ENCODE measurements at regions of chr1 and their contacts with region 1.

Region 1: DNA sequence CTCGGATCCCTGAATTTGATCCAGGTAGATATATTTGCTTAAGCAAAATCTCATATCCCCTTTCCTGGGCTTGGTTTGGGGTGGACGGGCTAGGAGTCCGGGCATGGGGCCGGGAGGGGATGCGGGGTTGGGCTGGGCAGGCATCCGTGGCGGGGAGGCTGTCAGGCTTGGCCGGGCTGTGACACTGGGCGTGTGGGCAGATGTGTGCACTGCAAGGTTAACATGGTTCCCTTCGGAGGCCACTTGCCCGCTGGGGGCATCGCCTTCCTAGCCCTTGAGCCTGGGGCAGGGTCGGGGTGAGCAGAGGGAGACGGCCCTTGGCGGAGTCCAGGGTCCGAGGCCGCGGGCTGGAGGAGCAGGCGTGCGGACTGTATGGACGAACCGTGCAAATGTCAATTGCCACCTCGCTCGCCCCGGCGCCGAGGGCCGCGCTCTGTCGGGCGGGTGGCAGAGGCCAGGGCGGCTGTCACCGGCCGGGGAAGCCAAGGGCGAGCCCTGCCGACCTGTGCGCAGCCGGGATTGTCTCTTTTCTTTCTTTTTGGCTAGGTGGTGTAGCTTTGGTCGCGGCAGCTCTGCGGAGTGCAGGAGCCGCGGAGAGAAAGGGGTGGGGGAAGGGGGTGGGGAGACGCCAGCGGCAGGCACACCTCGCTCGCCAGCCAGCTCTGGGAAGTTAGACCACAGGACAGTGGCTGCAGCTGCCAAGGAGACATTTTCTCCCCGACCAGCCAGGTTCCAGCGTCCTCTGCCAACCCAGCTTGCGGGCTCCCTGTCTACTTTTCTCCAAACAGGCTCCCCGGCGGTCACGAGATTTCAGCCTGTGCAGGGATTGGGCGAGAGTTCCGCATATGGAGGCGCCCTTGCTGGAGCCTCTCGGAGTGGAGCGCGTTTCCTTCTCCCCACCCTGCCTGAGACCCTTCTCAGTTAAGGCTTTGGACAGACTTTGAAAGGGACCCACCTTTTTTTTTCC is 1.3 kb downstream of the RCOR3 start:
- DNase-seq: peak; percentile 45 to 77
- ATAC-seq: peak; percentile 11 to 16 (median 14)
- H3K4me3 ChIP-seq: peak overlapping the region; percentile 97
- H3K4me3 Mint-ChIP-seq: peak overlapping the region; percentile 95
- H3K27ac ChIP-seq: peak overlapping the region; percentile 90
- H3K27ac Mint-ChIP-seq: peak overlapping the region; percentile 94 to 96
- H3K4me1 ChIP-seq: peaks cover 13% of the 10 kb centered on the region
- H3K4me1 Mint-ChIP-seq: peaks cover 29 to 32% of the 10 kb centered on the region in 2 donors
- H3K27me3 ChIP-seq: no peaks in the 10 kb centered on the region
- H3K27me3 Mint-ChIP-seq: no peaks in the 10 kb centered on the region
- CTCF ChIP-seq: no peak

Region 2: DNA sequence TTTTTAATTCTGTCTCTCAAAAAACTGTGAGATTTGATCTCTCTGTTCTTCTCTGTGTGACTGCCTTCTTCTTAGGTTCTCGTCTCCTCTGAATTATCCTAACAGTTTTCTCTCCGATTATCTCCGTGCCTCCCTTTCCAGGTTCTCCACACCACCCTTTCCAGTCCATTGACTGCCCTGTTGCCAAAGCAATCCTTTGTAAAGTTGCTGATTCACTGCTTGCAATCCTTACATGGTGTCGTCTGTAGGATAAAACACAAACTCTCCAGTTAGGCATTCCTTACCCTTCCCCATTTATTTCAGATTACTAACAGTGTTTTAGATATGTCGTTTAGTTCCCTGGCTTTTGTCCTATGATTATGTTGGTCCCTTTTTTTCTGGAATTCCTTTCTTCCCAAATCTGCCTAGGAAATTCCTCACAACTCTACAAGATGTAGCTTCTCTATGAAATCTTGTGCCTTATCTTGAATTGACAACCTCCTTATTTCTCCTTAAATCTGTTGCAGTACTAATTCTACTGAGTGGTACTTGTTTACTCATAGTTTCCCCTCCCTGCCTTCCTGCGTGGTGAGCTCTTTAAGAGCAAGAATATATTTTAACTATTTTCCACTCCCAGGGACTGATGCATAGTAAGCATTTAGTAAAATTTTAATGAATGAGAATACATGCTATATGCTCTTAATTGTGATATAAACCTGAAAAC is 21.0 kb after region 1 on chr1:
- intact Hi-C with region 1: no loop called
- DNase-seq: no peak
- ATAC-seq: no peak
- H3K4me3 ChIP-seq: no peak overlapping the region
- H3K4me3 Mint-ChIP-seq: no peak overlapping the region
- H3K27ac ChIP-seq: no peak overlapping the region
- H3K27ac Mint-ChIP-seq: no peak overlapping the region
- H3K4me1 ChIP-seq: no peaks in the 10 kb centered on the region
- H3K4me1 Mint-ChIP-seq: peaks cover 6 to 14% of the 10 kb centered on the region in 2 donors
- H3K27me3 ChIP-seq: no peaks in the 10 kb centered on the region
- H3K27me3 Mint-ChIP-seq: no peaks in the 10 kb centered on the region
- CTCF ChIP-seq: no peak

Region 3: DNA sequence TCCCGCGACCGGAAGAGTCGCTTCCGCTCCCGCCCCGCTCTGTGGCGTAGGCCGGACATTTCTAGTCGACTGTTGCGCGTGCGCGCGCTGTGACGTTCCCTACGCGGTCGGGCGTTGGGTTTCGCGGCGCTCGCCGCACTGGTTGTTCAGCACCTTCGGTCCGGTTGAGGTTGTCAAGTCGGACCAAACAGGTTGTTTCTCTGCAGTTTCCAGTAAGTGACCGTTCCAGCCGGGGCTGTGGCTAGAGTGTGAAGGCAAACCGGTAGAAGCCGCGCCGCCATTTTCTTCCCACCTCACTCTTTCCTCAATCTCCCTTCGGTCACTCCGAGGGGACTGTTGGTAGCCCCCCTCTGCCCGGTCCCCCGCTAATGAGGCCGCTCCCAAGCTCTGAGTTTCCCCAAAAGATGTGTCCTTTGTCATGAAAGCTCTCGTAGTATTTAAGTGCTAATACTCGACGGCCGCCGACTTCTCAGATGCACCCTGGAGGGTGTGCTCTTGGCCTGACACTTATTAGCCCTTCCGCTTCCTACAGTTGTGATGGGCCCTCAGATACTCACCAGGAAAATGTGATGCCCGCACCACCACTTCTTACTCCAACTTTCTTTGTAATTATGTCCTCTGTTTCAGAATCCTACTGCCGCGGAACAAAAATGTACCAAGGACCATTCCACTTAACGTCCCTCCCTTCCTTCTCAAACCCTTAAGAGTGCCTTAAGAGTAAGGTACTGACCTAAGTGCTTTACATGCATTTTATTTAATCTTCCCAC is 122.5 kb after region 1 on chr1:
- intact Hi-C with region 1: loop called (anchors 2 kb)
- DNase-seq: peak; percentile 79 to 87
- ATAC-seq: peak; percentile 92 to 94 (median 92)
- H3K4me3 ChIP-seq: peak overlapping the region; percentile 90
- H3K4me3 Mint-ChIP-seq: peak overlapping the region; percentile 91
- H3K27ac ChIP-seq: peak overlapping the region; percentile 97
- H3K27ac Mint-ChIP-seq: peak overlapping the region; percentile 95 to 97
- H3K4me1 ChIP-seq: peaks cover 10% of the 10 kb centered on the region
- H3K4me1 Mint-ChIP-seq: peaks cover 30 to 38% of the 10 kb centered on the region in 2 donors
- H3K27me3 ChIP-seq: no peaks in the 10 kb centered on the region
- H3K27me3 Mint-ChIP-seq: peaks cover 0 to 3% of the 10 kb centered on the region in 2 donors
- CTCF ChIP-seq: no peak

Region 4: GRCh38 chr1:211411639-211412038 is 151.2 kb after region 1 on chr1:
- intact Hi-C with region 1: no loop called
- DNase-seq: no peak
- ATAC-seq: no peak
- H3K4me3 ChIP-seq: no peak overlapping the region
- H3K4me3 Mint-ChIP-seq: no peak overlapping the region
- H3K27ac ChIP-seq: no peak overlapping the region
- H3K27ac Mint-ChIP-seq: no peak overlapping the region
- H3K4me1 ChIP-seq: peaks cover 4% of the 10 kb centered on the region
- H3K4me1 Mint-ChIP-seq: peaks cover 5 to 21% of the 10 kb centered on the region in 2 donors
- H3K27me3 ChIP-seq: no peaks in the 10 kb centered on the region
- H3K27me3 Mint-ChIP-seq: no peaks in the 10 kb centered on the region
- CTCF ChIP-seq: no peak

Measured in natural killer cell (primary cell).